Ovary (tissue), 10 donors: ENCODE measurements at regions of chr22 and their contacts with region 1.

Region 1: DNA sequence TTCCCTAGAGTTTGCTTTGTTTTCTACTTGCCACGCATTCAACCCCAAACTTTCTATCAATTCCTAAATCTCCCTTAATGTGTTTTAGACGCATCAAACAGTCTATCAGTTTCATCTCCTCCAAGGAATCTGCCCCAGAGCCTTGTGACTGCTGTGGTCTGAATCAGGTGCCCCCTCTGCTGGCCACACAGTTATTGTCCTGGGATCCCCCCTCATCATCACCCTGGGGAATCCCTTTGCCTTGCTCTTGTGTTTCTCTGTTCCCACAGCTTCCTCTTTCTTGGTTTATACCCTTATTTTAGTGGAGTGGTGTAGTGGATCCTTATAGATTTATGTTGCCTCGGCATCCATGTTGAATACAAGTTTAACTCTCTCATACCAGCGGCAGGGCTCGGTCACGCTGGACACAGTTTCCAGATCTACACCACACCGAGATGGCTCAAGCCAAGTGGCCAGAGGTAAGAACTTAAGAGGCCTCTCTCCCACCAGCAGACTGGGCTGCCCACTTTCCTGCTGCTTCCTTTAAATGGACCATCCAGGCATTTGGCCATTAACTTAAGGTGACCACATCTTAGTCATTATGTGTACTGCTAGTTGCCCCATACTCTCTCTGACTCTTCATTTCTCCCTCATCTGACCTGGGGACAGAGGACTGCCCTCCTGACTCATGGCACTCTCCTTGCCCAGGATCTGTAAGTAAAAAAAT is 8.2 kb downstream of the UPB1 start:
- DNase-seq: peak; percentile 28 to 58 (median 51)
- H3K4me3 ChIP-seq: no peak overlapping the region
- H3K27ac ChIP-seq: no peak overlapping the region
- H3K4me1 ChIP-seq: no peaks in the 10 kb centered on the region
- H3K27me3 ChIP-seq: no peaks in the 10 kb centered on the region
- CTCF ChIP-seq: peak in 1 of 3 donors; percentile 51
- EP300 ChIP-seq: no peak
- POLR2A ChIP-seq: no peak

Region 2: GRCh38 chr22:24106385-24107381 is 396.6 kb before region 1 on chr22:
- intact Hi-C with region 1: no loop called
- DNase-seq: peak in 3 of 5 donors; percentile 21 to 42 (median 40)
- H3K4me3 ChIP-seq: no peak overlapping the region
- H3K27ac ChIP-seq: peak overlapping the region in 1 of 2 donors; percentile 51
- H3K4me1 ChIP-seq: peaks cover 1% of the 10 kb centered on the region
- H3K27me3 ChIP-seq: no peaks in the 10 kb centered on the region
- CTCF ChIP-seq: peak in 2 of 3 donors; percentile 32 to 42
- EP300 ChIP-seq: no peak
- POLR2A ChIP-seq: no peak

Region 3: GRCh38 chr22:24325105-24325757 is 178.1 kb before region 1 on chr22:
- intact Hi-C with region 1: loop called in 1 of 4 experiments (anchors 10 kb)
- DNase-seq: no peak
- H3K4me3 ChIP-seq: no peak overlapping the region
- H3K27ac ChIP-seq: no peak overlapping the region
- H3K4me1 ChIP-seq: no peaks in the 10 kb centered on the region
- H3K27me3 ChIP-seq: no peaks in the 10 kb centered on the region
- CTCF ChIP-seq: peak; percentile 8 to 38 (median 27)
- EP300 ChIP-seq: no peak
- POLR2A ChIP-seq: no peak

Region 4: GRCh38 chr22:24433813-24434470 is 69.3 kb before region 1 on chr22:
- intact Hi-C with region 1: loop called in 2 of 4 experiments (anchors 5 to 10 kb)
- DNase-seq: no peak
- H3K4me3 ChIP-seq: no peak overlapping the region
- H3K27ac ChIP-seq: no peak overlapping the region
- H3K4me1 ChIP-seq: peaks cover 10% of the 10 kb centered on the region
- H3K27me3 ChIP-seq: no peaks in the 10 kb centered on the region
- CTCF ChIP-seq: no peak
- EP300 ChIP-seq: no peak
- POLR2A ChIP-seq: no peak

Region 5: DNA sequence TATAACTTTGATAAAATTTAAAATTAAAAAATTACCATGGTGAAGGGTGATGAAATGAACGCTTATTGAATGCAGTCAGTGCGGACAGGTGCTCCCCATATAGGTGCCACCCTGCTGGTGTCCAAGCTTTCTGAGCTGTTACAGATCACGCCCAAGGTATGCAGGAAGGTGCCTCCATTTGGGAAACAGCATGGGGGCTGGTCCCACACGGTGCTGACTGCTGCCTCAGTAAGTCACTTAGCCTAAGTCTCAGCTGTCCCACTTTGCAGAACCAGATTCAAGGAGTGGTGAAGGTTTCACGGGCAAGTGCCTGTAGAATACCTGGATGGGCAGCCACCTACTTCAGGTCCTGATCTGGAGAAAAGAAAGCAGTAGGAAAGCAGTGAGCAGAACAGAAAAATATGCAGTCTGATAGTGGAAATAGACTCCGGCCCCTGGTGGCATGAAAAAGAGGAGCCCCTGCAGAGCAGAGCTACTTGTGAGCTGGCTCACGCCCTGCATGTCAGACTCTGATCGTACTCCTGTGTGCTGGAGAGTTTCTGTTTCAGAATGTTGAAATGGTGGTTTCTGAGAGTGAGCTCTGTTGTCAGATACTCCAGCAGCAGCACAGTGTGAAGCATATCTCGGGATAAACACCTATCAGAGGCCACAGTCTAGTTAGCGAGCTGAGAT is 42.7 kb before region 1 on chr22:
- intact Hi-C with region 1: no loop called
- DNase-seq: no peak
- H3K4me3 ChIP-seq: no peak overlapping the region
- H3K27ac ChIP-seq: no peak overlapping the region
- H3K4me1 ChIP-seq: peaks cover 8% of the 10 kb centered on the region
- H3K27me3 ChIP-seq: no peaks in the 10 kb centered on the region
- CTCF ChIP-seq: no peak
- EP300 ChIP-seq: no peak
- POLR2A ChIP-seq: no peak